T-cell (primary cell): ENCODE measurements at regions of chr11 and their contacts with region 1.

Region 1: DNA sequence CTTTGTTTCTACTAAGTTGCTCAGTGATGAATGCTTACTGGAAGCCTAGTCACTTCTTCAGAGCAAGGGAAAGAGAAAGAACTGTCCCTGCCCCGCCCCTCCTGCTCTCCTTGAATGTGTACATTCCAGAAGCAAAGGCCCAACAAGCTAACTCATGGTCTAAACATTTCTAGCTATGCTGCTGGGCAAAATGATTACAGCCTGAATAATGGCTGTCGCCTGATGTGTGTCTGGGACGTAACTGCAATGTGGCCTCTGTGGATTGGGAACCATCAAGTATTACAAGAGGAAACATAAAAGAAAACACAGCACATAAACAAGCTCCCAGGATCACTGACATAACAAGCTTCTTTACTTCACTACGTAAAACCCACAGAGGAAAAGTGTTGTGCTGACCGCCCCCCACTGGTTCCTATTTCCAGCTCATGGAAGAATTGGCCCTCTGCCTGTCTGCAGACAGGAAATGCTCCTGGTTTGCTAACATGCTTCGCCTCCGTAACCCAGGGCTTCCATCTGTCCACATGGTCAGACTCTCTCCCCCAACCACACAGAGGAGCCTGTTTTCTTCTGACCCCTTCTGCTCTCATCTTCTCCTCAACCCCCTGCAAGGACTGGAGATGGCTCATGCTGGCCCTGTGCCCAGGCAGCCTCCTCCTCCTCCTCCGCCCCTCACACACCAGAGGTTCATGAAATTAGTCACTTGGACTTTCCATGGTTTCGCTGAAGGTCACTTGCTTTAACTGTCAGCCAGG is 187.2 kb downstream of the MAML2 start:
- DNase-seq: no peak
- ATAC-seq: no peak
- H3K4me3 ChIP-seq: no peak overlapping the region
- H3K4me3 Mint-ChIP-seq: peak overlapping the region in 2 of 3 donors; percentile 24 to 30
- H3K27ac ChIP-seq: no peak overlapping the region
- H3K27ac Mint-ChIP-seq: peak overlapping the region; percentile 90 to 97
- H3K4me1 ChIP-seq: peaks cover 13 to 27% of the 10 kb centered on the region in 2 experiments
- H3K4me1 Mint-ChIP-seq: peaks cover 59 to 68% (median 64%) of the 10 kb centered on the region in 3 donors
- H3K27me3 ChIP-seq: no peaks in the 10 kb centered on the region
- H3K27me3 Mint-ChIP-seq: no peaks in the 10 kb centered on the region

Region 2: GRCh38 chr11:96105197-96105895 is 50.5 kb before region 1 on chr11:
- CTCF ChIA-PET with region 1: interaction called in 1 of 2 experiments, 10 read pairs
- POLR2A ChIA-PET with region 1: no interaction called
- DNase-seq: peak in 2 of 35 experiments; percentile 36 to 68
- ATAC-seq: peak in 3 of 4 experiments; percentile 61 to 98 (median 81)
- H3K4me3 ChIP-seq: no peak overlapping the region
- H3K4me3 Mint-ChIP-seq: peak overlapping the region in 2 of 3 donors; percentile 8 to 25
- H3K27ac ChIP-seq: peak overlapping the region; percentile 40
- H3K27ac Mint-ChIP-seq: peak overlapping the region; percentile 67 to 74
- H3K4me1 ChIP-seq: peaks cover 0 to 20% of the 10 kb centered on the region in 2 experiments
- H3K4me1 Mint-ChIP-seq: peaks cover 18 to 54% (median 45%) of the 10 kb centered on the region in 3 donors
- H3K27me3 ChIP-seq: no peaks in the 10 kb centered on the region
- H3K27me3 Mint-ChIP-seq: no peaks in the 10 kb centered on the region

Region 3: DNA sequence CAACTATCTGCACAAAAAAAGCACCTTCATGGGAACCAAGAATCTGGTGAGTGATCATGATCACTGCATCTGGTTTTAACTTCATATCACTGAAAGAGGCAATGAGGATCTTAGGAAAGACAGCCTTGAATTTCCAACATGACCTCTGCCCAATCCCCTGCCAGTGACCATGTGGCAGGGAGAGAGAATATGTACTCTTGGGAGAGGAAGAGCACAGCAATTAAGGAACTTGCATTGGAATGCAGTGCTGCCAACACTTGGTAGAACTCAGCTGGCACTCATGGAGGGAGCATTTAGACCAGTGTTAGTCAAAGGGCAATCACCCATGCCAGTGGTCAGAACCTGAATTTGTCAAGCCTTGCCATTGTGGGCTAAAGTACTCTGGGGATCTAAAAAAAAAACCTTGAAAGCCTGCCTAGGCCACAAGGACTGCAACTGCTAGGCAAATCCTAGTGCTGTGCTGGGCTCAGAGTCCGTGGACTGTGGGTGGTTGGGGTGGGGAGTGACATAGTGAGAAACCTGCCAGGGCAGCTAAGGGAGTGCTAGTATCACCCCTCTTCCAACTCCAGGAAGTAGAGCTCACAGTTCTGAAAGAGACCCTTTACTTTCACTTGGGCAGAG is 257.1 kb after region 1 on chr11:
- CTCF ChIA-PET with region 1: no interaction called
- POLR2A ChIA-PET with region 1: no interaction called
- DNase-seq: no peak
- ATAC-seq: no peak
- H3K4me3 ChIP-seq: no peak overlapping the region
- H3K4me3 Mint-ChIP-seq: no peak overlapping the region
- H3K27ac ChIP-seq: no peak overlapping the region
- H3K27ac Mint-ChIP-seq: no peak overlapping the region
- H3K4me1 ChIP-seq: no peaks in the 10 kb centered on the region
- H3K4me1 Mint-ChIP-seq: no peaks in the 10 kb centered on the region
- H3K27me3 ChIP-seq: peaks cover 0 to 15% of the 10 kb centered on the region in 2 experiments
- H3K27me3 Mint-ChIP-seq: peaks cover 15 to 46% of the 10 kb centered on the region in 2 donors